ENCODE measurements at regions of chr3 and their contacts with region 1.

Region 1: GRCh38 chr3:179881791-179882190 is 154.9 kb downstream of the PEX5L start:
- DNase-seq: peak; percentile 2
- H3K4me3 ChIP-seq: no peak overlapping the region
- H3K27ac ChIP-seq: no peak overlapping the region
- H3K4me1 ChIP-seq: no peaks in the 10 kb centered on the region
- H3K27me3 ChIP-seq: no peaks in the 10 kb centered on the region
- CTCF ChIP-seq: no peak
- POLR2A ChIP-seq: no peak

Region 2: DNA sequence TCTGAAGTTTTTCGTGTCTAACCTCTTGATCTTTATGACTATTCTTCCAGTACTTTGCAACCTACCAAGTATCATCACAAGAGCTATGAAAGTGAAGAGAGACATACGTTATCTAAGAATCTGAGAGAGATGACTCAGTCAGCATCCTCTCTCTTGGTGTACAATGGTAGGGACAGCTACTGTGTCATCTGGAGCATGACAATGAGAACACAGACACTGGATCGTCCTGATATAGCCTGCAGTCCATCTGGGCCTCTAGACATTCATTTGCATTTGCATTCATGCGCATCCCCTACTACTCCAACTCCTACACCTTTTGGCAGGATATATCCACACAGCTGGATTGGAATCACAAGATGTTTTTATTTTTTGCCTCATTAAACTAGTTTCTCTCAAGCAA is 39.7 kb after region 1 on chr3:
- CTCF ChIA-PET with region 1: no interaction called
- POLR2A ChIA-PET with region 1: no interaction called
- dilution Hi-C with region 1: no loop called
- intact Hi-C with region 1: loop called (anchors 1 kb)
- DNase-seq: no peak
- H3K4me3 ChIP-seq: no peak overlapping the region
- H3K27ac ChIP-seq: no peak overlapping the region
- H3K4me1 ChIP-seq: no peaks in the 10 kb centered on the region
- H3K27me3 ChIP-seq: no peaks in the 10 kb centered on the region
- CTCF ChIP-seq: no peak
- POLR2A ChIP-seq: no peak

Measured in endothelial cell of umbilical vein (primary cell).